GM13976 (cell line): ENCODE measurements at regions of chr16 and their contacts with region 1.

Region 1: DNA sequence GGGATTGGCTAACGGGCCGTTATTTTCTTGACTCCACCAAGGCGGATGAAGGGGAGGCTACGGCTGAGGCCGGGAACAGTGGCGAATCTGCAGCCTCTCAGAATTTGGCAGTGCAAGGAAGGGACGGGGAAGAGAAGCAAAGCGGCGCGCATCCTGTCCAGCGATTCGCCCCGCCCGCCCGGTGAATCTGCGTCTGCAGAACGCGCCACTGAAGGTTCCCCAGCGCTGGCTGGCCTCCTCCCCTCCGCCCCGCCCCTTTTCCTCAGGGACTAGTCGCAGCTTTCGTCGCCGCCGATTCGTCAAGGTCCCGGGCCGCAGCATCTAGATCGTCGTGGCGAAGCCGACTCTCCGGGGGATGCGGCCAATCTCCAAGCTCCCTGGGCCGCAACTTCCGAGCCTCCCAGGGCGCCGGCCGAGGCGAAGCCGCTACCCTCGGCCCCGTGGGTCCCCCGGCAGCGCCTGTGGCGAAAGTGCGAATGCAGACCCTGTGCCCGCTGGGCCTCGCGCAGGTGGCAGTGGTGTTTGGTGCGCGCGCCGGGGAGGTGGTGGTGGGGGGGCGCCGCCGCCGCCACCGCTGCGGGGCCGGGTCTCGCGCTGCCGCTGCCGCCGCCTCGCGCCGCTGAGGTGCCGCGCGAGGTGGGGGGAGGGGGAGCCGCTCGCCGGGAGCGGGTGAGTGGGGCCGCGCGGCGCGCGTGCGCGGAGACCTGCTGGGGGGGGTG is at the start of gene SETD1A:
- DNase-seq: peak; percentile 98
- CTCF ChIP-seq: no peak

Region 2: DNA sequence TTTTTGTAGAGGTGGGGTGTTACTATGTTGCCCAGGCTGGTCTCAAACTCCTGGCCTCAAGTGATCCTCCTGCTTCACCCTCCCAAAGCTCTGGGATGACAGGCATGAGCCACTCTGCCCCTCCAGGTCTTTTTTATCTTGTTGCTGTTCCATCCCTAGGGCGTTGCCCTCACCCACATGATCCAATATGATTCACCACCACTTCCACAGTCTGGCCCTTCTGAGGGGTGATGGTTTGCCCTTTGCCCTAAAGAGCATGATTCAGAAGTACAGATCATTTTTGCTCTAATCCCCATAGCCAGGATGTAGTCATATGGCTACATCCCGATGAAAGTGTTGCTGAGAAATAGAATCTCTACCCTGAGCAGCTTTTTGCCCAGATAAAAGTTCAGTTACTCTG is 94.5 kb after region 1 on chr16:
- in situ Hi-C with region 1: no loop called
- DNase-seq: no peak
- CTCF ChIP-seq: no peak

Region 3: DNA sequence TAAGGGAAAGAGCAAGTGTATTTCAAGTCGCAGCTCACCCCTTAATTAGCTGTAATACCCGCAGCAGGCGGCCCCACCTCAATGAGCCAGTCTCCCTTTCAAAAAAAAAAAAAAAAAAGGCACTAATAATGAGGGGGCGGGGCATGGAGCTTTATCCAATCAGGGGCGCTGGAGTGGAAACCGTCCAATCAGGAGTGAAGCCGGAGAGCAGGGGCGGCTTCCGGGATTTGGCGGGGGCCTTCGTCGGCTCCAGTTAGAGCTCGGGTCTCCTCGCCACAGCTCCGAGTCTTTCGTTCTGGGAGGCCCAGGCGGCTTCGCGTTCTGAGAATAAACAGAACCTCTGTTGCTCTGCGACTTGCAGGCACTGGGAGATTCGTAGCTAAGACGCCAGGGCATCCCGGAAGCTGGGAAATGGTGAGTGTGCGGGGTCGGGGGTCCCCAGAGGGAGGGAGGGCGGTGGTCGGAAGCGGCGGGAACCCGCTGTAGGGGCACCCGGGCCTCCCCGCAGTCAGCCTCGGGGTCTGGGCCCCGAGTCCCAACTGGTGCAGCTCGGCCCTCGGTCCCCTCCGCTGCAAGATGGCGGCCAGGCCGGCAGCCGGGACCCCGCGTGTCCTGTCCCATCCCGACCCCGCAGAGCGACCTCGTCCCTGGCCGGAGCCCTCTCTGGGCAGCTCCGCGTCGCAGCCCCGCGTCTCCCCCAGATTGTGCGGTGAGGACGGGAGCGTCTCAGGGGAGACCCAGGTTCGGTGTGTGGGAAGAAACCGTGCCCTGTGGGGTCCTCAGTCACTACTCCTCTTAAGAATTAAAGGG is 916.1 kb after region 1 on chr16 and contains the start of gene ZNF267:
- in situ Hi-C with region 1: loop called (anchors 25 kb)
- DNase-seq: peak; percentile 88
- CTCF ChIP-seq: no peak